GM23248 (cell line): ENCODE measurements at regions of chr10 and their contacts with region 1.

Region 1: DNA sequence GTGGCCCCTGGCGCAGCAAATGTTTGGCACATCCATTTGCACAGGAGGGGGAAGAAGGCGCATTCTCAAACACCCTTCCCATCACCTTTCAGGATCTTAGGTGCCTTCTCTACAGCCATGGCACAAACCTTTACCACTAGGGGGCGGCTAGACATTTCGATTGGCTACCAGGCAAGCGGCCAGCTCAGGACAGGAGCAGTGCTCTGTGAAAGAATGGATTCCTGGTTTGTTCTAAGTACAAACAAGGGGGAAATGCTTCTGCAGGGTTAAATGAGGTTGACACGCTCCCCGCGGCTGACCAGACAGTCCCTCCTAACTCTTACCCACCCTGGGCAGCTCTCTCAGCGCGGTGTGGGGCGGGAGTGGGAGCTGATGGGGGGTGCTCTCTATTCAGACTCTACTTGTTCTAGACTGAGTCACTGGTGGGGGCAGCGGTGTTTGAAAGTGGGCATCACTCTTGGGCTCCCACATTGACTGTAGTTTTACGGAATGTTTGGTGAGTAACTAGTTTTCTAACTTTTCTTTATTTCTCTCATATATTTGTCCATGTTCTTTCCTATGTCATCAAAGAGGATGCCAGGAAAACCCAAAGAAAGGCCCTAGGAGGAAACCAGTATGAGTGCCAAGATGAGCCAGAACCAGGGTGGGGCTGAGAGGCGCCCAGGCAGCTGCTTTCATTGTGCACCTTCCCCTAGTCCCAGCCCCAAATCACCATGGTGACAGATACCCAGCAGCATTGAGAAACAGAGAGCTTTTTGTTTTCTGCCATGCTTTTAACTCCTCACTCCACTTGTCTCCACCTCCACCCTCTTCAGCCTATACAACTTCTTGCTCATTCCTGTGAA is 61.4 kb upstream of the GPR158 start:
- DNase-seq: peak; percentile 93
- H3K4me3 ChIP-seq: no peak overlapping the region
- H3K27ac ChIP-seq: no peak overlapping the region
- H3K4me1 ChIP-seq: peaks cover 8% of the 10 kb centered on the region
- H3K27me3 ChIP-seq: peaks cover 10% of the 10 kb centered on the region; the same call in 1 of the 2 replicates

Region 2: DNA sequence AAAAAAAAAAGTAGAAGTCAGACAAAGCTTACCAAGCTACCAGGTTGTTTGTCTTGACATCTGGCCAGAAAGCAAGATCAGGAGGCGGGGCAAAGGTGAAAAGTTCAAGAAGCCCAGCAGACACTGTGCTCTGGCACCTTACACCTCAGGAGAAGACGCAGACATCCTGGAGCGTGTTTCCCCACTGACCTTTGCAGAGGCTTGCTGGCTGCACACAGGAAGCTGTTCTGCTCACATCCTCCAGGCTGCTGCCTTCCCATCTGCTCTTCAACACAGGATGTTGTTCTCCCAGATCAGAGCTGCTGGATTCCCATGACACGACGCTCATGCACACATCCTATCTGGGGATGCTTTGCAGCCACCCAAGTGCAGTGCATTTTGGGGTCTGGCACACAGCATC is 1078.8 kb before region 1 on chr10:
- in situ Hi-C with region 1: no loop called
- DNase-seq: no peak
- H3K4me3 ChIP-seq: no peak overlapping the region
- H3K27ac ChIP-seq: no peak overlapping the region
- H3K4me1 ChIP-seq: no peaks in the 10 kb centered on the region
- H3K27me3 ChIP-seq: no peaks in the 10 kb centered on the region

Region 3: DNA sequence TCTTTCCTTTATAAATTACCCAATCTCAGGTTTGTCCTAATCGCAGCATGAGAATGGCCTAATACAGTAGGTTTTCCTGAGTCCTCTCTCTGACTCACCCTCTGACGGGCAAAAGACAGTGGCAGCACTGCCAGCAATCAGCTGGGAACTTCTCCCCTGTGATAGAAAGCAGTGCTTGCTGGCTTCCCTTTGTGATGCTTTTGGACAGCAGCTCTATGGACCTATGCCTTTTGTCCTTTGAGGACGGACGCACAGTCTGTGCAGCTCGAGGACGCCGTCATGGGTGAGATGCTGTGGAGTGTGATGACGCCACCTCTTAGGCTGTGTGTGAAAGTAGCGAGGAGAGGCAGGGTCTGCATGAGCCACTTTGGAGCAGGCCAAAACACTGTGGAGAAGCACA is 835.6 kb before region 1 on chr10:
- in situ Hi-C with region 1: no loop called
- DNase-seq: peak; percentile 28
- H3K4me3 ChIP-seq: no peak overlapping the region
- H3K27ac ChIP-seq: no peak overlapping the region
- H3K4me1 ChIP-seq: no peaks in the 10 kb centered on the region
- H3K27me3 ChIP-seq: no peaks in the 10 kb centered on the region

Region 4: GRCh38 chr10:25226775-25227682 is 113.6 kb after region 1 on chr10:
- in situ Hi-C with region 1: loop called (anchors 10 kb)
- DNase-seq: peak; percentile 79
- H3K4me3 ChIP-seq: no peak overlapping the region
- H3K27ac ChIP-seq: no peak overlapping the region
- H3K4me1 ChIP-seq: no peaks in the 10 kb centered on the region
- H3K27me3 ChIP-seq: no peaks in the 10 kb centered on the region